ENCODE measurements at regions of chr10 and their contacts with region 1.

Region 1: DNA sequence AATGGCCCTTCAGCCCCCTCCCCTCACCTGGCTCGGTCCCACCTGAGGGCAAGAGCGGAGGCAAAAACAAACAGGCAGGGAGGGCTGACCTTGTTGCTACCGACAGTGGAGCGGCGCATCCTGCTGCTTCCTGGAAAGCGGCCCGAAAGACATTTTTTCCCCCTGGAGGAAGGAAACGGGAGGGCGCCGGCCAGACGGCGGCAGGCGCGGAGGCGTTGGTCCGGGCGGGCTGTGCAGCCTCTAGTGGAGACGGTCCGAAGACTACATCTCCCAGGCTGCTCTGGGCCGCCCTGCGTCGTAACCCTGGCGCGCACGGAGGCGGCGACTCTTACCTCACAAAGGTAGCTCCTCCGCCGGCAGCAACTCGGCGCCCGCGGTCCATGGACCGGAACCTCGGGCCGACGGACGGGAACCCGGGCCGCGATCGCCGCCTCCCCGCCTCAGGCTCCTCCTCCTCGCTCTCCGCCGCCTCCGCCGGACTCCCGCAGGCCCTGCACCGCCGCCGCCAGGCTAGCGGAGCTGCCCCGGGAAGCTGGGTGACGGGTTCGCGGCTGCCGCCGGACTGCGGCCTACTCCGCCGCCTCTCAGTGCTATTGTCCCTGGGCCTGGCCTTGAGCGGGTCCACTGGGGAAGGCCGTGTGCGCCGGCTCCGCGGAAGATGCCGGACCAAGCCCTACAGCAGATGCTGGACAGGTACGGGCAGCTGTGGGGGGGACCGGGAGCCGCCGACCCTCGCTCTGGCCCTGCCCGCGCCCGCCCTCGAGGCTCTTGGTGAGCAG is at the starts of genes CPEB3 and MARCHF5:
- DNase-seq: peak; percentile 77 to 92 (median 85)
- ATAC-seq: peak; percentile 99
- H3K4me3 ChIP-seq: peak within 1 kb of the TSS; percentile 90
- H3K4me3 Mint-ChIP-seq: peak within 1 kb of the TSS; percentile 85 to 97 (median 95)
- H3K27ac ChIP-seq: peak within 1 kb of the TSS; percentile 90
- H3K27ac Mint-ChIP-seq: peak within 1 kb of the TSS; percentile 75 to 96 (median 88)
- H3K4me1 ChIP-seq: peaks cover 0 to 6% of the 10 kb centered on the region in 2 donors
- H3K4me1 Mint-ChIP-seq: peaks cover 21 to 41% (median 31%) of the 10 kb centered on the region in 7 donors
- H3K27me3 ChIP-seq: no peaks in the 10 kb centered on the region
- H3K27me3 Mint-ChIP-seq: no peaks in the 10 kb centered on the region
- total RNA-seq, gene CPEB3: 2.0 to 3.3 (median 2.2) TPM
- total RNA-seq, gene MARCHF5: 22.0 to 37.1 (median 33.8) TPM

Region 2: GRCh38 chr10:92124616-92125143 is 166.3 kb before region 1 on chr10:
- CTCF ChIA-PET with region 1: no interaction called
- POLR2A ChIA-PET with region 1: no interaction called
- intact Hi-C with region 1: no loop called
- DNase-seq: no peak
- ATAC-seq: no peak
- H3K4me3 ChIP-seq: no peak overlapping the region
- H3K4me3 Mint-ChIP-seq: no peak overlapping the region
- H3K27ac ChIP-seq: no peak overlapping the region
- H3K27ac Mint-ChIP-seq: no peak overlapping the region
- H3K4me1 ChIP-seq: no peaks in the 10 kb centered on the region
- H3K4me1 Mint-ChIP-seq: peaks cover 0 to 6% (median 0%) of the 10 kb centered on the region in 7 donors
- H3K27me3 ChIP-seq: no peaks in the 10 kb centered on the region
- H3K27me3 Mint-ChIP-seq: no peaks in the 10 kb centered on the region

Region 3: GRCh38 chr10:92208736-92209327 is 82.2 kb before region 1 on chr10:
- CTCF ChIA-PET with region 1: no interaction called
- POLR2A ChIA-PET with region 1: no interaction called
- intact Hi-C with region 1: loop called in 1 of 2 experiments (anchors 1 kb)
- DNase-seq: no peak
- ATAC-seq: no peak
- H3K4me3 ChIP-seq: no peak overlapping the region
- H3K4me3 Mint-ChIP-seq: no peak overlapping the region
- H3K27ac ChIP-seq: no peak overlapping the region
- H3K27ac Mint-ChIP-seq: no peak overlapping the region
- H3K4me1 ChIP-seq: no peaks in the 10 kb centered on the region
- H3K4me1 Mint-ChIP-seq: peaks cover 0 to 20% (median 7%) of the 10 kb centered on the region in 7 donors
- H3K27me3 ChIP-seq: no peaks in the 10 kb centered on the region
- H3K27me3 Mint-ChIP-seq: peaks cover 0 to 6% (median 0%) of the 10 kb centered on the region in 5 donors

Region 4: DNA sequence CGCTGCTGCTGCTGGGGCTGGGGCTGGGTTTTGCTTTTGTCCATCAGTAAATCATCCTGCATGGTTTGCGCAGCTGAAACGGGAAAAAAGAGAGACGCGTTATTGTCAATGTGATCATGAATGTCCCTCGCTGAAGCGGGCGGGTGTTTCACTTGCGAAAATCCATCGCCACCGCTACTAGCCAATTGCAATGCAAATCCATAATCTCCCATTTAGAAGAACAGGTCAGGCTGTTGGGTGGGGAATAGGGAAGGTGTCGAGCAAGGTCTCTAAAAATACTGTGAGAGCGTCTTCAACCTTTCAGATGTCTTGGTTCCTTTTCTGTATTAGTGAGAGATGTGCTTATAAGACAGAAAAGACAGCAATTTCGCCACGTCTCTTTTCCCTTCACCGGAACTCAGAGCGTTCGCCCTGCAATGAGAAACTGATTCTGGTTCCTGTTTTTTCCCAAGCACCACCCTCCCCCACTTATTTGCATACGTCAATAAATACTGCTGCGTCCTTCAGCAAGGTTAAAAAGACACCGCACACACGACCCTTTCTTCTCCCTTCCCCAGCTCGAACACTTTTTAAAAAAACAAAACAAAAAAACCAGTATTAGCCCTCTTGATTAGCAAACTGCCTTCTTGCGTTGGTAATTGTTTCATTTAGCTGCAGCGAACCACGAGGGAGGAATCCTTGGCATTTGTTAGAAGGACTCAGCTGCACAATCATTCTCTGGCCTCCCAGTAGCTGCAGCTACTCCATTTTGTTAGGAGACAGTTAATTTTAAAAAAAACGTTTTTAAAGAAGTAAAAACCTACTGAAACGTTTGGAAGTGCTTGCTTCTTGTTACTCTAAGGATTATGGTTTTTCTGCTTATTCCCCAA is 50.5 kb before region 1 on chr10:
- CTCF ChIA-PET with region 1: no interaction called
- POLR2A ChIA-PET with region 1: interaction called, 6 read pairs
- intact Hi-C with region 1: loop called (anchors 1 kb)
- DNase-seq: peak in 8 of 9 donors; percentile 19 to 43 (median 28)
- ATAC-seq: peak; percentile 58
- H3K4me3 ChIP-seq: peak overlapping the region; percentile 78
- H3K4me3 Mint-ChIP-seq: peak overlapping the region; percentile 88 to 99 (median 92)
- H3K27ac ChIP-seq: peak overlapping the region; percentile 58
- H3K27ac Mint-ChIP-seq: peak overlapping the region; percentile 31 to 94 (median 71)
- H3K4me1 ChIP-seq: peaks cover 0 to 11% of the 10 kb centered on the region in 2 donors
- H3K4me1 Mint-ChIP-seq: peaks cover 14 to 57% (median 31%) of the 10 kb centered on the region in 7 donors
- H3K27me3 ChIP-seq: no peaks in the 10 kb centered on the region
- H3K27me3 Mint-ChIP-seq: peaks cover 0 to 37% (median 0%) of the 10 kb centered on the region in 5 donors

Region 5: GRCh38 chr10:92267343-92267742 is 23.7 kb before region 1 on chr10:
- CTCF ChIA-PET with region 1: no interaction called
- POLR2A ChIA-PET with region 1: no interaction called
- intact Hi-C with region 1: no loop called
- DNase-seq: no peak
- ATAC-seq: no peak
- H3K4me3 ChIP-seq: no peak overlapping the region
- H3K4me3 Mint-ChIP-seq: no peak overlapping the region
- H3K27ac ChIP-seq: no peak overlapping the region
- H3K27ac Mint-ChIP-seq: no peak overlapping the region
- H3K4me1 ChIP-seq: no peaks in the 10 kb centered on the region
- H3K4me1 Mint-ChIP-seq: peaks cover 0 to 13% (median 0%) of the 10 kb centered on the region in 7 donors
- H3K27me3 ChIP-seq: no peaks in the 10 kb centered on the region
- H3K27me3 Mint-ChIP-seq: no peaks in the 10 kb centered on the region

Region 6: DNA sequence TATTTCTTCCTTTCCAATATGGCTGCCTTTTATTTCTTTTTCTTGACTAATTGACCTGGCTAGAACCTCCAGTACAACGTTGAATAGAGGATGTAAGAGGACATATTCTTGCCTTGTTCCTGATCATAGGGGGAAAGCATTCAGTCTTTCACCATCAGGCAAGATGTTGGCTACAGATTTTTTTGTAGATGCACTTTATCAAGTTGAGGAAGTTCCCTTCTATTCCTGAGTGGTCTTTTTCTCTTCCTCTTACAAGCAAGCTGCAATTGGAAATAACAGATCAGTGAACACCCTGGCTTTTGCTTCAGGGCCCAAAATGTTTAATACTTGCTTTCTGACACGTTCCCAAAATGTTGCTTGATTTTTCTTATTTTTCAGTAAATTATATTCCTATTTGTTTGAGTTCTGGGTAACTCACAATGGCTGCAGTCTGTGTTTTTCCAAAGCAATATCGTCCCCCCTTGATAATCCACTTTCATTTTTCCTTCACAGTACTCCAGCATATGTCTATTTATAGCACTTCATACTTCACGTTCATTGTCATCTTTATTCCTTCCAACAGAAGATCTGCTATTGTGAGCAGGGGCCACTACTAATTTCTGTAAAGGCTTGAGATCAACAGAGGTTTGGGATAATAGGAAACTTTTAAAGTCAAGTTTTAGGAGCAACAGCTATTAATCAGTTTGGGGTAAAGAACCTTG is 11.9 kb before region 1 on chr10:
- CTCF ChIA-PET with region 1: no interaction called
- POLR2A ChIA-PET with region 1: no interaction called
- intact Hi-C with region 1: no loop called
- DNase-seq: no peak
- ATAC-seq: no peak
- H3K4me3 ChIP-seq: no peak overlapping the region
- H3K4me3 Mint-ChIP-seq: no peak overlapping the region
- H3K27ac ChIP-seq: no peak overlapping the region
- H3K27ac Mint-ChIP-seq: no peak overlapping the region
- H3K4me1 ChIP-seq: no peaks in the 10 kb centered on the region
- H3K4me1 Mint-ChIP-seq: peaks cover 0 to 5% (median under 1%) of the 10 kb centered on the region in 7 donors
- H3K27me3 ChIP-seq: no peaks in the 10 kb centered on the region
- H3K27me3 Mint-ChIP-seq: no peaks in the 10 kb centered on the region

Region 7: DNA sequence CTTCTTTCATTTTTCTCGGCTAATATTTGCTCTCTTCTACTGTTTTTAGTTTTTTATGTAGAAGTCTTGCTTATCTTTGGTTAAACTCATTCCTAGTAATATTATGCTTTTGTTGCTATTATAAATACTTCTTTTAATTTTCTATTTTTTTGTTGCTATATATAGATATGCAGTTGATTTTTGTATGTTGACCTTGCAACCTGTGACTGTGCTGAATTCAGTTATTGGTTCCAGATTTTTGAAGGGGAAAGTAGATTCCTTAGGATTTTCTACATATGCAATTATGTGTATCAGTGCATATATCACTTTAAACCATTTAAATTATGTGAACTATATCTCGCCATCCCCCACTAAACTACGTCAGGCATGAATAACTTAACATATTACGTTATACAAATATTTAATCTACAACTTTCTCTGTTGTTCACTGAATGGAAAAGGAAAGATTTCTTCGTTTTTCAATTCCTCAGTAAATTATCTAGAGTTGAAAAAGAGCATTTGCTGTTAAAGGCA is 211.3 kb after region 1 on chr10:
- CTCF ChIA-PET with region 1: no interaction called
- POLR2A ChIA-PET with region 1: no interaction called
- intact Hi-C with region 1: no loop called
- DNase-seq: no peak
- ATAC-seq: no peak
- H3K4me3 ChIP-seq: no peak overlapping the region
- H3K4me3 Mint-ChIP-seq: no peak overlapping the region
- H3K27ac ChIP-seq: no peak overlapping the region
- H3K27ac Mint-ChIP-seq: no peak overlapping the region
- H3K4me1 ChIP-seq: no peaks in the 10 kb centered on the region
- H3K4me1 Mint-ChIP-seq: peaks cover 0 to 1% (median 0%) of the 10 kb centered on the region in 7 donors
- H3K27me3 ChIP-seq: no peaks in the 10 kb centered on the region
- H3K27me3 Mint-ChIP-seq: no peaks in the 10 kb centered on the region

Region 8: GRCh38 chr10:92573798-92574547 is 282.9 kb after region 1 on chr10 and contains the start of gene IDE:
- CTCF ChIA-PET with region 1: no interaction called
- POLR2A ChIA-PET with region 1: interaction called, 7 read pairs
- intact Hi-C with region 1: loop called (anchors 1 to 5 kb)
- DNase-seq: peak; percentile 70 to 89 (median 77)
- ATAC-seq: peak; percentile 88
- H3K4me3 ChIP-seq: peak within 1 kb of the TSS; percentile 90
- H3K4me3 Mint-ChIP-seq: peak within 1 kb of the TSS; percentile 78 to 94 (median 88)
- H3K27ac ChIP-seq: peak within 1 kb of the TSS; percentile 83
- H3K27ac Mint-ChIP-seq: peak within 1 kb of the TSS; percentile 78 to 95 (median 89)
- H3K4me1 ChIP-seq: peaks cover 12 to 14% of the 10 kb centered on the region in 2 donors
- H3K4me1 Mint-ChIP-seq: peaks cover 27 to 39% (median 38%) of the 10 kb centered on the region in 7 donors
- H3K27me3 ChIP-seq: no peaks in the 10 kb centered on the region
- H3K27me3 Mint-ChIP-seq: no peaks in the 10 kb centered on the region
- total RNA-seq, gene IDE: 20.7 to 36.7 (median 28.4) TPM

Measured in naive thymus-derived CD4-positive, alpha-beta T cell (primary cell).